Endothelial cell of umbilical vein (primary cell): ENCODE measurements at regions of chr21 and their contacts with region 1.

Region 1: GRCh38 chr21:29175408-29176134 is 45.1 kb downstream of the MAP3K7CL start:
- DNase-seq: peak; percentile 98
- H3K4me3 ChIP-seq: peak overlapping the region in 1 of 3 experiments; percentile 10
- H3K27ac ChIP-seq: peak overlapping the region; percentile 63
- H3K4me1 ChIP-seq: peaks cover 26% of the 10 kb centered on the region
- H3K27me3 ChIP-seq: no peaks in the 10 kb centered on the region
- CTCF ChIP-seq: no peak
- POLR2A ChIP-seq: no peak

Region 2: DNA sequence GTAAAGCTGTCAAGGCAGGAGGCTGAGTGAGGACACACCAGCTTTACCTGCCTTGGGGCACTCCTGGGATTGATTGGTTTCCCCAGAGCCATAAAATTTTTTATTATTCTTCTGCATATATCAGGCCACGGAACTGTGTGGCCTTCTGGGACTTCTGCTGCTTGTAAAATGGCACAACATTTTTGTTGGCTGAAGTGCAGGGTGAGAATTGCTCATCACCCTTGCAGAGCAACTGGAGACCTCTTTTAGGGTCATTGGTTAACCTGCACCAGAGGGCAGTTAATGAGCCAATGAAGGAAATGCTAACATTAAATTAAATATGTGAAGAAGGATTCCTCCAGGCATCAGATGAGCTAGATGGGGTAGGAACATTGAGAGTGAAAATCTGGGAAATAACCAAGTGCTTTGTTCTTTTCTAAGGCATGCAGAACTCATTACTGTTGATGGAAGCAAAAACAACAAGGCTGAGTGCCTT is 270.6 kb before region 1 on chr21:
- CTCF ChIA-PET with region 1: no interaction called
- POLR2A ChIA-PET with region 1: no interaction called
- dilution Hi-C with region 1: no loop called
- intact Hi-C with region 1: no loop called
- DNase-seq: no peak
- H3K4me3 ChIP-seq: no peak overlapping the region
- H3K27ac ChIP-seq: no peak overlapping the region
- H3K4me1 ChIP-seq: no peaks in the 10 kb centered on the region
- H3K27me3 ChIP-seq: no peaks in the 10 kb centered on the region
- CTCF ChIP-seq: no peak
- POLR2A ChIP-seq: no peak

Region 3: DNA sequence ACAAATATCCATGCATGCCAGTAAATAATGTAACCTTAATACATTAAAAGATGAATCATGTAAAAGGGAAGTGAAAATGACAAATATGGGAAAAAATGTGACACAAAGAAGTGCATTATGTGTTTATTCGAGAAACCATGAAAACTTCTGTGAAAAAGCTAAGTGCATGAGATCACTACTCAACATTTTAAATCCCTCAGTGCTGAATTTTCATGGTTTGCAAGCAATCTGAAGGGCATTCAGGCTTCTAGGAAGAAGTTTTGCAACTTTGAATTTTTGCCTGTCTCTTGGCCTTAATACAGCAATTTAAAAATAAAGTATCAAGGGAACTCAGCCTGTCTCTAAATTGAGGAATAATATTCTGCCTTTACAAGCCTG is 33.1 kb after region 1 on chr21:
- CTCF ChIA-PET with region 1: no interaction called
- POLR2A ChIA-PET with region 1: no interaction called
- dilution Hi-C with region 1: no loop called
- intact Hi-C with region 1: loop called (anchors 2 kb)
- DNase-seq: peak; percentile 84
- H3K4me3 ChIP-seq: peak overlapping the region in 1 of 3 experiments; percentile 38
- H3K27ac ChIP-seq: peak overlapping the region; percentile 97
- H3K4me1 ChIP-seq: peaks cover 31% of the 10 kb centered on the region
- H3K27me3 ChIP-seq: no peaks in the 10 kb centered on the region
- CTCF ChIP-seq: no peak
- POLR2A ChIP-seq: no peak

Region 4: GRCh38 chr21:29217818-29218291 is 42.3 kb after region 1 on chr21:
- CTCF ChIA-PET with region 1: no interaction called
- POLR2A ChIA-PET with region 1: no interaction called
- dilution Hi-C with region 1: no loop called
- intact Hi-C with region 1: loop called (anchors 1 kb)
- DNase-seq: peak; percentile 97
- H3K4me3 ChIP-seq: no peak overlapping the region
- H3K27ac ChIP-seq: peak overlapping the region; percentile 81
- H3K4me1 ChIP-seq: peaks cover 23% of the 10 kb centered on the region
- H3K27me3 ChIP-seq: no peaks in the 10 kb centered on the region
- CTCF ChIP-seq: no peak
- POLR2A ChIP-seq: peak; percentile 45